ENCODE measurements at regions of chr14 and their contacts with region 1.

Region 1: DNA sequence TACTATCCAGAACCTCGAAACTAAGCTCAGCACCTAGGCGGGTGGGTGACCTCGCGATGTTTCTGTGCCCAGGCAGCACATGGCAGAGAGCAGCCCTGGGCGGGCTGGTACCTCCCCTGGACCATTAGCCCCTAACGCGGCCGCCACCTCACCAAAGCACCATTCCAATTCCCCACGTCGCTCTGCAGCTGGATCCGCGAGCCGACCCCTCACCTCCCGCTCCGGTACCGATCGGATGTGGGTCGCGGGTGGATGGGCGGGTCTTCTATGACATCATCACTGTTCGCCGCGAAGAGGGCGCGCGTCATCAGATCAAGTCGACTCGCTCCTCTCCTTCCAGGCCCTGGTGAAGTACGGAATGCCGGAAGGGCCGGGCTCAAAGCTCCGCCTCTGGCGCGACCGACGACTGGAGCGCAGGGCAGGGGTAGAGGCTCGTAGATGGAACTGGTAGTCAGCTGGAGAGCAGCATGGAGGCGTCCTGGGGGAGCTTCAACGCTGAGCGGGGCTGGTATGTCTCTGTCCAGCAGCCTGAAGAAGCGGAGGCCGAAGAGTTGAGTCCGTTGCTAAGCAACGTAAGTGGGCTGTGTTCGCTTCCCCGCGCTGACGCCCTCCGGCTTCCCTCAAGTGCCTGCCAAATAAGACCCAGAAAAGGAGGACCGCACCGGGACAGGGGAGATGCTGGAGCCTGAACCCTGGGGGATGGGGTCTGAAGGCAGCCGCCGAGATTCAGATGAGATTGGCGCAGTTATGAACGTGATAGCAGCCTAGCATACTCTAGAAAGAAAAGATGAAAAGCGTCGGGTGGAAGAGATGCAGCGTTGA is at the starts of genes SLC38A6 and TRMT5:
- DNase-seq: peak; percentile 92 to 95
- H3K4me3 ChIP-seq: peak within 1 kb of the TSS; percentile 99
- H3K27ac ChIP-seq: peak within 1 kb of the TSS; percentile 78
- H3K4me1 ChIP-seq: peaks cover 36% of the 10 kb centered on the region
- H3K27me3 ChIP-seq: no peaks in the 10 kb centered on the region
- CTCF ChIP-seq: no peak
- total RNA-seq, gene SLC38A6: 44.7 and 45.5 TPM in 2 replicates
- total RNA-seq, gene TRMT5: 17.3 and 17.6 TPM in 2 replicates

Region 2: GRCh38 chr14:60648934-60649874 is 331.8 kb before region 1 on chr14 and contains the start of gene SIX1:
- CTCF ChIA-PET with region 1: no interaction called
- POLR2A ChIA-PET with region 1: interaction called, 4 read pairs
- intact Hi-C with region 1: loop called (anchors 2 kb)
- DNase-seq: peak; percentile 82 to 90
- H3K4me3 ChIP-seq: peak within 1 kb of the TSS; percentile 88
- H3K27ac ChIP-seq: 0 out of 2 replicates have a peak within 1 kb of the TSS, but pooled peaks have one; percentile 28
- H3K4me1 ChIP-seq: peaks cover 19% of the 10 kb centered on the region
- H3K27me3 ChIP-seq: no peaks in the 10 kb centered on the region
- CTCF ChIP-seq: no peak
- total RNA-seq, gene SIX1: 8.1 and 9.4 TPM in 2 replicates

Region 3: GRCh38 chr14:60734465-60735242 is 246.4 kb before region 1 on chr14 and contains the start of gene MNAT1:
- CTCF ChIA-PET with region 1: no interaction called
- POLR2A ChIA-PET with region 1: no interaction called
- intact Hi-C with region 1: loop called (anchors 5 kb)
- DNase-seq: peak; percentile 74 to 83
- H3K4me3 ChIP-seq: peak within 1 kb of the TSS; percentile 73
- H3K27ac ChIP-seq: peak within 1 kb of the TSS; percentile 31
- H3K4me1 ChIP-seq: peaks cover 24% of the 10 kb centered on the region
- H3K27me3 ChIP-seq: no peaks in the 10 kb centered on the region
- CTCF ChIP-seq: no peak
- total RNA-seq, gene MNAT1: 79.7 and 93.3 TPM in 2 replicates